HEK293T (cell line): ENCODE measurements at regions of chr13 and their contacts with region 1.

Region 1: DNA sequence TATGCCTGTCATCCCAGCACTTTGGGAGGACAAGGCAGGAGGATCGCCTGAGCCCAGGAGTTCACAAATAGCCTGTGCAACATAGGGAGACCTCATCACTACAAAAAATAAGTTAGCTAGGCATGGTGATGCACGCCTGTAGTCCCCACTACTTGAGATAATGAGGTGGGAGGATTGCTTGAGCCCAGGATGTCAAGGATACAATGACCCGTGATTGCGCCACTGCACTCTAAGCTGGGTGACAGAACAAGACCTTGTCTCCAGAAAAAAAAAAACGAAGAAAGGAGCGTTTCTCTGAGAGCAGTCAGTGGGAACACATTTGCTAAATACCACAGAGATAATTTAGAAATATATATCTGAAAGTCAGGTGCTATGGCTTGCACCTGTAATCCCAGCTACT is 11.9 kb downstream of the CDADC1 start:
- DNase-seq: no peak

Region 2: GRCh38 chr13:49093376-49093775 is 166.2 kb before region 1 on chr13:
- CTCF ChIA-PET with region 1: no interaction called
- POLR2A ChIA-PET with region 1: no interaction called
- DNase-seq: no peak

Region 3: DNA sequence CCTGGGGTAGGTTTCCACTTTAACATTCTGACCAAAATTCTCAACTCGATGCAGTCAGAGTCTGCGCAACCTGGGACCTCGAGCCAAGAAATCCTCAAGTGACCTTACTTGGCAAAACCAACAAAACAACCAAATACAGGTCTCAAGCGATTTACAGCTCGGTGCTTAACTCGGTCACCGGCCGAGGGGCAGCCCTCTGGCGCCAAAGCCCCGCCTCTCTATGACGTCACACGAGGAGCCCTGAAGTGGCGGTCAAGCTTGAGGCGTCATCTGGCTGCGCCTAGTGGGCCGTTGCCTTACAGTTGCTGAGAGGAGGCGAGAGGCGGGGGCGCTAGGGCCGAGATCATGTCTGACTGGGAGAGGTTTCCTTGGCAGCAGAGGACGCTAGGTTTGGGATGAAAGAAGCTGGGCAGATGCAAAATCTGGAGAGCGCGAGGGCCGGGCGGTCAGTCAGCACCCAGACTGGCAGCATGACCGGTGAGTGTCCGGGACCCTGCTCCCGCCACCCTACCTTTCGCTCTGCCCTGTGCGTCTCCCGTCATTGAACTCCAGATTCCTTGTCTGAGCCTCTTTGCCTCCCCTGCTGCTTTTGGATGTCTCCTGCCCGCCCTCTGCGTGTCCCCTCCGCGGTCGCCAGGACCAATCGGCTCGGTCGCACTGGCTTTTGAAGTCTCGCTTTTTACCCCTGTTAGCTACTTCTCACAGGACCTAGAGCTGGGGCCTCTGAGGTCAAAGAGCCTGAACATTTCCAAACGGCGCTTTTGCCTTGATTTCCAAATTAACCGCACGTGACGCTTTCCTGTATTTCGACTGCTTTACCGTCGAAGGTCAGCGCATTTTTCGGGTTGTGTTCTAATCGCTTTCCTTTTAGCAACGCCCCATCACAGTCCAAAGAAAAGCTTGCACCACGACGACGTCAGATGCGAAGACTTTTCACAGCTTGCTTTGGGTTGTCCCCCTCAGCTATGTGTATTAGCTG is 11.7 kb before region 1 on chr13 and contains the start of gene CDADC1:
- CTCF ChIA-PET with region 1: no interaction called
- POLR2A ChIA-PET with region 1: interaction called, 15 read pairs
- DNase-seq: peak; percentile 96